Activated CD4-positive, alpha-beta T cell treated with anti-CD3 and anti-CD28 coated beads, Interleukin-2, amount 10 ng/mL, durations not matched to agents 24 days and 14 days (primary cell): ENCODE measurements at regions of chr3 and their contacts with region 1.

Region 1: GRCh38 chr3:152222327-152222726 is 46.4 kb upstream of the MBNL1 start:
- DNase-seq: peak; percentile 59
- H3K4me3 Mint-ChIP-seq: peak overlapping the region; percentile 61
- H3K27ac Mint-ChIP-seq: peak overlapping the region; percentile 79
- H3K4me1 Mint-ChIP-seq: peaks cover 58% of the 10 kb centered on the region
- H3K27me3 Mint-ChIP-seq: no peaks in the 10 kb centered on the region

Region 2: GRCh38 chr3:152183473-152183872 is 38.9 kb before region 1 on chr3:
- intact Hi-C with region 1: no loop called
- DNase-seq: peak; percentile 81
- H3K4me3 Mint-ChIP-seq: no peak overlapping the region
- H3K27ac Mint-ChIP-seq: no peak overlapping the region
- H3K4me1 Mint-ChIP-seq: peaks cover 38% of the 10 kb centered on the region
- H3K27me3 Mint-ChIP-seq: no peaks in the 10 kb centered on the region

Region 3: GRCh38 chr3:152202976-152203626 is 19.2 kb before region 1 on chr3:
- intact Hi-C with region 1: loop called (anchors 1 kb)
- DNase-seq: no peak
- H3K4me3 Mint-ChIP-seq: peak overlapping the region; percentile 78
- H3K27ac Mint-ChIP-seq: peak overlapping the region; percentile 87
- H3K4me1 Mint-ChIP-seq: peaks cover 60% of the 10 kb centered on the region
- H3K27me3 Mint-ChIP-seq: no peaks in the 10 kb centered on the region

Region 4: GRCh38 chr3:152209060-152209459 is 13.3 kb before region 1 on chr3:
- intact Hi-C with region 1: loop called (anchors 1 kb)
- DNase-seq: peak; percentile 55
- H3K4me3 Mint-ChIP-seq: peak overlapping the region; percentile 61
- H3K27ac Mint-ChIP-seq: peak overlapping the region; percentile 84
- H3K4me1 Mint-ChIP-seq: peaks cover 66% of the 10 kb centered on the region
- H3K27me3 Mint-ChIP-seq: no peaks in the 10 kb centered on the region

Region 5: GRCh38 chr3:152232679-152233078 is 10.4 kb after region 1 on chr3:
- intact Hi-C with region 1: loop called (anchors 1 kb)
- DNase-seq: no peak
- H3K4me3 Mint-ChIP-seq: no peak overlapping the region
- H3K27ac Mint-ChIP-seq: peak overlapping the region; percentile 23
- H3K4me1 Mint-ChIP-seq: peaks cover 46% of the 10 kb centered on the region
- H3K27me3 Mint-ChIP-seq: no peaks in the 10 kb centered on the region